ENCODE measurements at regions of chr6 and their contacts with region 1.

Region 1: DNA sequence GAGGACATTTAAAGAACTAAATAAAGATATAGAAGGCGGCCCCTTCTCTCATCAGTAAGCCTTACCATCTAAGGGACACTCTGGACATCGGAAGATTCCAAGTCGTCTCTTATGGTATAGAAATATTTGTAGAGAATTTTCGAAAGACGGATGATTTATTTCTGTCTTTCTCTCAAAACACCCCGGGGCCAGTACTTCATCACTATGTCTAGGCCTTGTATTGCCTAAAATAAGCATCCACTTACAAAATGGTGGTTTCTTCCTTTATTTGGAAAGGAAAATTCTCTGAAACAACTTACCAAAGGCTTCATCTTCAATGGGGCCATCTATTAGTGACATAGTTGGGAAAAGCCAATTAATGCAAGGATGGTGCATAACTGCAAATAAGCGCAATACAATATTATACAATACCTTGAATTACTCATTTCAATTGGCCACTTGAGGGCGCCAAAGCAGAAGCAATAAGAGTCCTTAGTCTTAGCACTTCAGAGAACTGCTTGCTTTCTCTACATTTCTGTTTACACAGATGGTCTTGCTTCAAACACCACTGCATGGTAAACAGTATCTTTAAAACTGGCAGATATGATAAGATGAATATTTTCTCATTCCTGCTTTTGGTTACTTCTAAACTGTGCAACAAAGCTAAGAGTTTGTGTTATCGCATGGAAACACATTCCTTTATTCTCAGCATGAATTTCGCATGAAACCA is 113.2 kb downstream of the VIP start:
- DNase-seq: peak; percentile 10 to 77 (median 52)
- ATAC-seq: peak; percentile 48
- H3K4me3 ChIP-seq: no peak overlapping the region
- H3K4me3 Mint-ChIP-seq: no peak overlapping the region
- H3K27ac ChIP-seq: no peak overlapping the region
- H3K27ac Mint-ChIP-seq: no peak overlapping the region
- H3K4me1 ChIP-seq: no peaks in the 10 kb centered on the region
- H3K4me1 Mint-ChIP-seq: no peaks in the 10 kb centered on the region
- H3K27me3 ChIP-seq: no peaks in the 10 kb centered on the region
- H3K27me3 Mint-ChIP-seq: peaks cover 20% of the 10 kb centered on the region
- CTCF ChIP-seq: peak; percentile 75

Region 2: GRCh38 chr6:152932865-152933264 is 69.1 kb after region 1 on chr6:
- CTCF ChIA-PET with region 1: no interaction called
- POLR2A ChIA-PET with region 1: no interaction called
- intact Hi-C with region 1: loop called in 1 of 2 experiments (anchors 5 kb)
- DNase-seq: no peak
- ATAC-seq: no peak
- H3K4me3 ChIP-seq: no peak overlapping the region
- H3K4me3 Mint-ChIP-seq: no peak overlapping the region
- H3K27ac ChIP-seq: no peak overlapping the region
- H3K27ac Mint-ChIP-seq: no peak overlapping the region
- H3K4me1 ChIP-seq: no peaks in the 10 kb centered on the region
- H3K4me1 Mint-ChIP-seq: no peaks in the 10 kb centered on the region
- H3K27me3 ChIP-seq: no peaks in the 10 kb centered on the region
- H3K27me3 Mint-ChIP-seq: peaks cover 9% of the 10 kb centered on the region
- CTCF ChIP-seq: no peak

Region 3: GRCh38 chr6:152948150-152948768 is 84.5 kb after region 1 on chr6:
- CTCF ChIA-PET with region 1: no interaction called
- POLR2A ChIA-PET with region 1: no interaction called
- intact Hi-C with region 1: loop called (anchors 1 to 5 kb)
- DNase-seq: peak in 3 of 14 experiments; percentile 40 to 56 (median 54)
- ATAC-seq: peak; percentile 65
- H3K4me3 ChIP-seq: no peak overlapping the region
- H3K4me3 Mint-ChIP-seq: no peak overlapping the region
- H3K27ac ChIP-seq: no peak overlapping the region
- H3K27ac Mint-ChIP-seq: no peak overlapping the region
- H3K4me1 ChIP-seq: peaks cover 6% of the 10 kb centered on the region
- H3K4me1 Mint-ChIP-seq: peaks cover 8% of the 10 kb centered on the region
- H3K27me3 ChIP-seq: peaks cover 8 to 13% of the 10 kb centered on the region in 2 experiments
- H3K27me3 Mint-ChIP-seq: peaks cover 39% of the 10 kb centered on the region
- CTCF ChIP-seq: peak; percentile 75

Region 4: DNA sequence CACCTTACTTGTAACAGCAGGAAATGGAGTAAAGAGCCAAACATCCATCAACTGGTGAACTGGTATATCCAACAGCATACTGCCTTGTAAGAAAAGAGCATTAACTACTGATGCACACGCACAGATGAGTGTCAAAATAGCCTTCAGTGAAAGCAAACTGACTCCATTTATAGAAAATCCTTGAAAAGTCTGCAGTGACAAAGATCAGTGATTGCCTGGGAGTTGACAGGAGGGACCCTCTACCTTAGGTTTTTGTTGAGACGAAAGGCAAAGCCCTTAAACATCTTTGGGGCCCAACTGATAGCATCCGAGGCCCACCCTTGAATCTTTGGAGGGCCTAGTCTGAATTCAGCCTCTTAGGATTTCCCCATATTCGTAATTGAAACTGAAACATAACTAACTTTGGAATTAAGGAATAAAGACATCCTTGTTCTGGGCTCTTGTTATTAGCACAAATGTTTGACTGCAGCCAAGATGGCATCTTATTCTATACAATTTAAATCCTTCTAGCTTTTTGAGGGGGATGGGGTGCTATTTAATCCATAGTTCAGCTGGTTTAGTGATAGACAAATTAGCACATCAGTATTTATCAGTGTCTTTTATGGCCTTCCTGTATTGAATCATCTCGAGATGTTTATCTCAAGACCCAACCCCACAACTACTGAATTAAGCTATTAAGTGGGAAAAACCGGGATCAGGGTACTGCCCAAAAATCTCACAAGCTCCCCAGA is 106.1 kb after region 1 on chr6:
- CTCF ChIA-PET with region 1: no interaction called
- POLR2A ChIA-PET with region 1: no interaction called
- intact Hi-C with region 1: no loop called
- DNase-seq: no peak
- ATAC-seq: no peak
- H3K4me3 ChIP-seq: no peak overlapping the region
- H3K4me3 Mint-ChIP-seq: no peak overlapping the region
- H3K27ac ChIP-seq: no peak overlapping the region
- H3K27ac Mint-ChIP-seq: no peak overlapping the region
- H3K4me1 ChIP-seq: no peaks in the 10 kb centered on the region
- H3K4me1 Mint-ChIP-seq: peaks cover 11% of the 10 kb centered on the region
- H3K27me3 ChIP-seq: no peaks in the 10 kb centered on the region
- H3K27me3 Mint-ChIP-seq: no peaks in the 10 kb centered on the region
- CTCF ChIP-seq: no peak

Region 5: DNA sequence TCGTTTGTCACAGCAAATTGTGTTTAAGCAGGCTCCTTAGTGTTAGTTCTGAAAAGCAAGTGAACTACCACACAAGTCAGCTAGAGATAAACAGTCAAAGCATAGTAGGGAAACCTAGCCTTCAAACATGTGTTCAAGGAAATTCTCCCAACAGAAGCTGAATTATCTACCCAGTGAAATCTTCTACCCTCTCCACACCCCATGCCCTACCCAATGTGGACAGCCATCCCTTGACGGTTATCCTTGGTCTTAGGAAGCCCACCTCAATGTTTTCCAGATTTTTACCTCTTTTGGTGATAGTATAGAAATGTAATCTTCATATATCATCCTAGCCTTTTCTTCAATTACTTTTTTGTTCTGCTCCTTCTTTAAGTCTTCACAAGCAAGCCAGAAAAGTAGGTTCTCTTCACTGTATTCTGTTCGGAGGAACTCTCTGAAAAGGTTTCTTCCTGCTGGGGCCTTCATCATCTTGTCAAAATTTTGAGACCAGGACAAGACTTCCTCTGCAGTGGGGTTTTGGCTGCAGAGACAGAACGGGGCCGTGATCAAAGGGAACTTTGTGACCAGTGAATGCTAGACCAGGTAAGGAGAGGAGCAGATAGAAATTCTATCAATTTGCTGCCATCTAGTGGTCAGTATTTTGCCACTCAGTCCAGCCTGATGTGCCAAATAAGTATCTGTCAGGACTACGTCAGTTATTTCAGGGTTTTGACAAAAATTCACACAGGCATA is 160.4 kb after region 1 on chr6:
- CTCF ChIA-PET with region 1: no interaction called
- POLR2A ChIA-PET with region 1: no interaction called
- intact Hi-C with region 1: loop called (anchors 1 kb)
- DNase-seq: peak in 10 of 14 experiments; percentile 7 to 78 (median 26)
- ATAC-seq: peak; percentile 83
- H3K4me3 ChIP-seq: no peak overlapping the region
- H3K4me3 Mint-ChIP-seq: no peak overlapping the region
- H3K27ac ChIP-seq: no peak overlapping the region
- H3K27ac Mint-ChIP-seq: no peak overlapping the region
- H3K4me1 ChIP-seq: peaks cover 5% of the 10 kb centered on the region
- H3K4me1 Mint-ChIP-seq: no peaks in the 10 kb centered on the region
- H3K27me3 ChIP-seq: no peaks in the 10 kb centered on the region
- H3K27me3 Mint-ChIP-seq: peaks cover 59% of the 10 kb centered on the region
- CTCF ChIP-seq: peak; percentile 92

Region 6: GRCh38 chr6:153511896-153512496 is 648.2 kb after region 1 on chr6:
- CTCF ChIA-PET with region 1: no interaction called
- POLR2A ChIA-PET with region 1: no interaction called
- intact Hi-C with region 1: loop called (anchors 10 kb)
- DNase-seq: peak in 4 of 14 experiments; percentile 2 to 18 (median 11)
- ATAC-seq: peak; percentile 39
- H3K4me3 ChIP-seq: no peak overlapping the region
- H3K4me3 Mint-ChIP-seq: no peak overlapping the region
- H3K27ac ChIP-seq: no peak overlapping the region
- H3K27ac Mint-ChIP-seq: no peak overlapping the region
- H3K4me1 ChIP-seq: no peaks in the 10 kb centered on the region
- H3K4me1 Mint-ChIP-seq: no peaks in the 10 kb centered on the region
- H3K27me3 ChIP-seq: no peaks in the 10 kb centered on the region
- H3K27me3 Mint-ChIP-seq: no peaks in the 10 kb centered on the region
- CTCF ChIP-seq: peak; percentile 47